ENCODE measurements at regions of chr16 and their contacts with region 1.

Region 1: DNA sequence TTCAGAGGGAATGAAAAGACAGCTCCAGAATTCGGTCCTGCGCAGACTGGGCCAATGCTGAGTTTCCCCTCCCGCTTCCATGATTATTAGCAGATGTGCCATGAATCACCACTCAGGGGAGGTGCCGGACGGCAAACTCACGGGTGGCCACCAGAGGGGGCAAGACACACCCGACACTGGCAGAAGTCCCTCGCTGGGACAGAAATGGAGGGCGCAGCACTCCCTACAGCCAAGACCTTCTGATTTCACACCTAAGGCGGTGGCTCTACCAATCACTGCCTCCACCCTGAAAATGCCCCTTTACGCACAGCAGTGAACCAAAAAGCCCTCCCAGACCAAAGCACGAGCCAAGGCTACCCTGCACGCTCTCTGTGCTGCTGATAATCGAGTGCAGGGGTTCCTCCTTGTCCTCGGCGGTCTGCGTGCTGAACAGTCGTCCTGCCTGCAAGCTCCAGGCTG is 26.8 kb downstream of the TRAP1 start:
- DNase-seq: peak; percentile 89 to 93
- ATAC-seq: peak; percentile 97 to 98
- H3K4me3 ChIP-seq: no peak overlapping the region
- H3K27ac ChIP-seq: peak overlapping the region in 1 of 2 experiments; percentile 54; a peak in 1 of 6 replicates
- H3K4me1 ChIP-seq: peaks cover 9% of the 10 kb centered on the region; the same call in 2 of the 3 replicates
- CTCF ChIP-seq: peak; percentile 89
- EP300 ChIP-seq: no peak
- POLR2A ChIP-seq: no peak
- RAD21 ChIP-seq: peak; percentile 73 to 74

Region 2: GRCh38 chr16:3674513-3675295 is 15.8 kb before region 1 on chr16:
- CTCF ChIA-PET with region 1: interaction called, 19 read pairs
- POLR2A ChIA-PET with region 1: no interaction called
- DNase-seq: no peak
- ATAC-seq: peak in 1 of 2 experiments; percentile 26; a peak in 3 of 6 replicates
- H3K4me3 ChIP-seq: no peak overlapping the region
- H3K27ac ChIP-seq: no peak overlapping the region
- H3K4me1 ChIP-seq: no peaks in the 10 kb centered on the region
- CTCF ChIP-seq: no peak
- EP300 ChIP-seq: no peak
- POLR2A ChIP-seq: no peak
- RAD21 ChIP-seq: no peak

Region 3: DNA sequence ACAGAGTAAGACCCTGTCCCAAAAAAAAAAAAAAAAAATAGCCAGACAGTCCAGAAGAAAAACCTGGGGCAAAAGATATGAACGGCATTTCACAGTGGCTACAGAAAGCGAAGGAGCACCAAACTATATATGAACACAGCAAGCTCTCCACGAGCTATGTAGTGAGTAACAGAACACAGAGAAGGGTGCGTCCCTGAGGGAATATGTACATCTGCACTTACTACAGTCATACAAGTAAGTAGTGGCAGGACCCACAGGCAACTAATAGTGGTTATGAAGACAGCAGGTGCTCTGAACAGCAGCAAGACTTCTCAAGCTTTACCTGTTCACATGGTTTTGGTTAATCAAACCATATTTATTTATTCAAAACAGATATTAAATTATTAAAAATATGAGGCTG is 11.0 kb after region 1 on chr16:
- CTCF ChIA-PET with region 1: interaction called, 45 read pairs
- POLR2A ChIA-PET with region 1: no interaction called
- DNase-seq: no peak
- ATAC-seq: no peak
- H3K4me3 ChIP-seq: no peak overlapping the region
- H3K27ac ChIP-seq: no peak overlapping the region
- H3K4me1 ChIP-seq: peaks cover 6% of the 10 kb centered on the region
- CTCF ChIP-seq: no peak
- EP300 ChIP-seq: no peak
- POLR2A ChIP-seq: no peak
- RAD21 ChIP-seq: no peak

Region 4: GRCh38 chr16:3712861-3713372 is 22.4 kb after region 1 on chr16:
- CTCF ChIA-PET with region 1: interaction called, 21 read pairs
- POLR2A ChIA-PET with region 1: interaction called, 4 read pairs
- DNase-seq: no peak
- ATAC-seq: no peak
- H3K4me3 ChIP-seq: no peak overlapping the region
- H3K27ac ChIP-seq: no peak overlapping the region
- H3K4me1 ChIP-seq: no peaks in the 10 kb centered on the region; the same call in 2 of the 3 replicates
- CTCF ChIP-seq: no peak
- EP300 ChIP-seq: no peak
- POLR2A ChIP-seq: no peak
- RAD21 ChIP-seq: no peak

Region 5: GRCh38 chr16:3879887-3880564 is 189.5 kb after region 1 on chr16:
- CTCF ChIA-PET with region 1: interaction called, 17 read pairs
- POLR2A ChIA-PET with region 1: interaction called, 4 read pairs
- DNase-seq: peak; percentile 27 to 49
- ATAC-seq: peak; percentile 62 to 76
- H3K4me3 ChIP-seq: peak overlapping the region; percentile 94
- H3K27ac ChIP-seq: peak overlapping the region; percentile 94 to 97
- H3K4me1 ChIP-seq: peaks cover 22% of the 10 kb centered on the region; the same call in 2 of the 3 replicates
- CTCF ChIP-seq: peak; percentile 74
- EP300 ChIP-seq: no peak
- POLR2A ChIP-seq: no peak
- RAD21 ChIP-seq: peak; percentile 14 to 68; a peak in 4 of 5 replicates

Region 6: GRCh38 chr16:3907586-3907985 is 217.1 kb after region 1 on chr16:
- CTCF ChIA-PET with region 1: no interaction called
- POLR2A ChIA-PET with region 1: no interaction called
- DNase-seq: no peak
- ATAC-seq: 0 out of 6 replicates have a peak, but pooled peaks of 1 of the 2 experiments have one; percentile 52
- H3K4me3 ChIP-seq: no peak overlapping the region
- H3K27ac ChIP-seq: no peak overlapping the region
- H3K4me1 ChIP-seq: no peaks in the 10 kb centered on the region
- CTCF ChIP-seq: no peak
- EP300 ChIP-seq: no peak
- POLR2A ChIP-seq: no peak
- RAD21 ChIP-seq: no peak